Common myeloid progenitor, CD34-positive (primary cell): ENCODE measurements at regions of chr2 and their contacts with region 1.

Region 1: DNA sequence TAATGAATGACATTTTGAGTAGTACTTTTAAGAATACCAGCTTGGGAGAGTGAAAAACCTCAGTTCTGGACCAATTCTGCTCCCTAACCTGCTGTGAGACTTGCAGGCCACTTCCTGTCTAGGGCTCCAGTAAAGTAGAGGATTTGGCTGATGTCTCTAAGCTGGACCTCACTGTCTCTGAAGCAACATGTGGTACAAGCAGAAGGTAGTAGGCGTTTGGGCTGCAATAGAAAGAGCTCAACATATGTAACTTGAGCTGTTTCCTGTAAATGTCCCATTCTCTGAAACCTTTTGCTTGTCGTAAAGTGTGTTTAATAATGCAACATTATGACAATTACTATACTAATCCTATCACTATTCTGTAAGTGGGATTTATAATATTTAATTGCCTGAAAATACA is 213.1 kb downstream of the MYO3B start:
- DNase-seq: no peak
- H3K4me3 ChIP-seq: no peak overlapping the region
- H3K27ac ChIP-seq: no peak overlapping the region
- H3K4me1 ChIP-seq: peaks cover 0 to 14% (median 3%) of the 10 kb centered on the region in 4 experiments
- H3K27me3 ChIP-seq: no peaks in the 10 kb centered on the region

Region 2: GRCh38 chr2:170369894-170370293 is 21.1 kb before region 1 on chr2:
- CTCF ChIA-PET with region 1: interaction called, 20 read pairs
- POLR2A ChIA-PET with region 1: no interaction called
- DNase-seq: peak; percentile 41 to 57 (median 46)
- H3K4me3 ChIP-seq: no peak overlapping the region
- H3K27ac ChIP-seq: no peak overlapping the region
- H3K4me1 ChIP-seq: peaks cover 3 to 20% (median 7%) of the 10 kb centered on the region in 4 experiments
- H3K27me3 ChIP-seq: peaks cover 0 to 12% (median 4%) of the 10 kb centered on the region in 5 experiments